CD8-positive, alpha-beta T cell (primary cell): ENCODE measurements at regions of chr7 and their contacts with region 1.

Region 1: GRCh38 chr7:99997545-99998137 is 17.8 kb upstream of the ZKSCAN1 start:
- DNase-seq: peak; percentile 51 to 91 (median 74)
- ATAC-seq: peak; percentile 88
- H3K4me3 ChIP-seq: peak overlapping the region; percentile 48 to 54
- H3K4me3 Mint-ChIP-seq: peak overlapping the region; percentile 73
- H3K27ac ChIP-seq: peak overlapping the region; percentile 64 to 82
- H3K27ac Mint-ChIP-seq: peak overlapping the region; percentile 92
- H3K4me1 ChIP-seq: peaks cover 12% of the 10 kb centered on the region
- H3K4me1 Mint-ChIP-seq: peaks cover 11% of the 10 kb centered on the region
- H3K27me3 ChIP-seq: no peaks in the 10 kb centered on the region
- H3K27me3 Mint-ChIP-seq: no peaks in the 10 kb centered on the region
- CTCF ChIP-seq: no peak

Region 2: GRCh38 chr7:100215895-100216294 is 218.3 kb after region 1 on chr7:
- CTCF ChIA-PET with region 1: no interaction called
- POLR2A ChIA-PET with region 1: no interaction called
- intact Hi-C with region 1: loop called in 1 of 2 experiments (anchors 10 kb)
- DNase-seq: no peak
- ATAC-seq: no peak
- H3K4me3 ChIP-seq: no peak overlapping the region
- H3K4me3 Mint-ChIP-seq: no peak overlapping the region
- H3K27ac ChIP-seq: no peak overlapping the region
- H3K27ac Mint-ChIP-seq: no peak overlapping the region
- H3K4me1 ChIP-seq: peaks cover 61% of the 10 kb centered on the region
- H3K4me1 Mint-ChIP-seq: peaks cover 58% of the 10 kb centered on the region
- H3K27me3 ChIP-seq: no peaks in the 10 kb centered on the region
- H3K27me3 Mint-ChIP-seq: no peaks in the 10 kb centered on the region
- CTCF ChIP-seq: no peak